ENCODE measurements at regions of chr12 and their contacts with region 1.

Region 1: GRCh38 chr12:26425587-26426260 is 230.4 kb downstream of the SSPN start:
- DNase-seq: no peak
- H3K4me3 ChIP-seq: no peak overlapping the region
- H3K4me3 Mint-ChIP-seq: no peak overlapping the region
- H3K27ac Mint-ChIP-seq: no peak overlapping the region
- H3K4me1 ChIP-seq: peaks cover 25% of the 10 kb centered on the region
- H3K4me1 Mint-ChIP-seq: peaks cover 23% of the 10 kb centered on the region
- H3K27me3 ChIP-seq: no peaks in the 10 kb centered on the region
- H3K27me3 Mint-ChIP-seq: no peaks in the 10 kb centered on the region
- CTCF ChIP-seq: no peak

Region 2: DNA sequence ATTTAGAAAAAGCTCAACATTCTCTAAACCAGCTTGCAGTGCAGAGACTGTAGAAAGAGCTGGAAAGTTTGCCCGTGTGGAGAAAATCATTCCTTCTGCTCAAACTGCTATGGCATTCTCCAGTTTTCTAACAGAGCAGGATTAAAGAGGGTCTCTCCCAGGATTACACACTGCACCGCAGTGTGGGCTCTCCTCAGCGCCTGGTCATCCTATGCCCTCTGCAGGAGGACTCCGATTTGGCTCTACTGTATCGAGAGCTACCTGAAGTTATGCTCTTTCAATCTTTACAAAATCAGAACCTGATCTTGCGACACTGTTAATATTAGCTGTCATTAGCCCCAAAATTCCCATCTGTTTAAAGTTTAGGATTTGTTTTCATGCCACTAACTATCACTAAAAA is 333.9 kb before region 1 on chr12:
- CTCF ChIA-PET with region 1: no interaction called
- POLR2A ChIA-PET with region 1: no interaction called
- intact Hi-C with region 1: loop called (anchors 1 kb)
- DNase-seq: peak in 1 of 2 experiments; percentile 42
- H3K4me3 ChIP-seq: no peak overlapping the region
- H3K4me3 Mint-ChIP-seq: peak overlapping the region; percentile 7
- H3K27ac Mint-ChIP-seq: peak overlapping the region; percentile 84
- H3K4me1 ChIP-seq: peaks cover 61% of the 10 kb centered on the region
- H3K4me1 Mint-ChIP-seq: peaks cover 45% of the 10 kb centered on the region
- H3K27me3 ChIP-seq: no peaks in the 10 kb centered on the region
- H3K27me3 Mint-ChIP-seq: no peaks in the 10 kb centered on the region
- CTCF ChIP-seq: peak; percentile 30 to 34

Region 3: DNA sequence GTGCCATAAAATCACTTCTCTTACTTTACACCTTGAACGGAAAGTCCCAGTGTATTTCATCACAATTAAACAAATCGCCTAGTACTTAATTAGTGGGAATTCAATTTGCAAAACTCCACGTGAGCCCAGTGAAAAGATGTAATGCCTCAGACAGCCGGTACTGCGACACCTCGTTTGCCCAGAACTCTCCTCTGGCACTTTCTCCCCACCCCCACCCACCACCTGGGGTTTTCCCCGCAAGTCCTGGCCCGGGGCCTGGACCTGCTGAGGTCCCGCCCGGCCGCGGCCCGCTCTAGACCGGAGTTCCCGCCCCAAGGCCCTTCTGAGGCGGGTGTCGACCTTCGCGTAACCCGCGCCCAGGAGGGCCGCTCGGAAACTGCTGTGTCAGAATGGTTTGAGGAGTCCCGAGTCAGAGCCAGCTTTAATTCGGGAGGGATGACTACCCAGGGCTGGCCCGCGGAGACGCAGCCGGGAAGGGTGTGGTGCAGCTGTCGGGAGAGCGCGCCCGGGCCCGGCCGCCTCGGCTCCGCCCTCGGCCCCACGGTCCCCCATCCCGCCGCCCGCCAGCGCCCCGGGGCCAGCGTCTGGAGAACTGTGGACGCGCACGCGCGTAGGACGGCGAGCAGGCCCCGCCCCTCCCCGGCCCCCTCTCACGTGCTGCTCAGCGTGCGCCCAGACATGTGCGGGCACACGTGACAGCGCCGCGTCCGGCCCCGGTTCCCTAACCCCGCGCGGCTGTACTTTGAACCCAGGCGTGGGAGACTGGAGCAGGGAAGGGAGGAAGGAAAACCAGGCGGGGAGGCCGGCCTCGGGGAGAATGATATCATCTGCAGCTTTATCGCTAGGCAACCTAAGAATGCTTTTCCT is 311.6 kb before region 1 on chr12:
- CTCF ChIA-PET with region 1: no interaction called
- POLR2A ChIA-PET with region 1: no interaction called
- intact Hi-C with region 1: loop called (anchors 5 kb)
- DNase-seq: peak; percentile 98
- H3K4me3 ChIP-seq: peak overlapping the region; percentile 77
- H3K4me3 Mint-ChIP-seq: peak overlapping the region; percentile 78
- H3K27ac Mint-ChIP-seq: peak overlapping the region; percentile 90
- H3K4me1 ChIP-seq: peaks cover 23% of the 10 kb centered on the region
- H3K4me1 Mint-ChIP-seq: peaks cover 18% of the 10 kb centered on the region
- H3K27me3 ChIP-seq: no peaks in the 10 kb centered on the region
- H3K27me3 Mint-ChIP-seq: peaks cover 2% of the 10 kb centered on the region
- CTCF ChIP-seq: peak; percentile 12 to 48

Region 4: GRCh38 chr12:26389348-26389747 is 36.4 kb before region 1 on chr12:
- CTCF ChIA-PET with region 1: no interaction called
- POLR2A ChIA-PET with region 1: no interaction called
- intact Hi-C with region 1: loop called (anchors 2 kb)
- DNase-seq: peak in 1 of 2 experiments; percentile 69
- H3K4me3 ChIP-seq: no peak overlapping the region
- H3K4me3 Mint-ChIP-seq: peak overlapping the region; percentile 15
- H3K27ac Mint-ChIP-seq: peak overlapping the region; percentile 5
- H3K4me1 ChIP-seq: peaks cover 15% of the 10 kb centered on the region
- H3K4me1 Mint-ChIP-seq: peaks cover 12% of the 10 kb centered on the region
- H3K27me3 ChIP-seq: no peaks in the 10 kb centered on the region
- H3K27me3 Mint-ChIP-seq: no peaks in the 10 kb centered on the region
- CTCF ChIP-seq: no peak

Region 5: GRCh38 chr12:26402648-26403047 is 23.1 kb before region 1 on chr12:
- CTCF ChIA-PET with region 1: no interaction called
- POLR2A ChIA-PET with region 1: no interaction called
- intact Hi-C with region 1: no loop called
- DNase-seq: peak; percentile 46 to 47
- H3K4me3 ChIP-seq: no peak overlapping the region
- H3K4me3 Mint-ChIP-seq: no peak overlapping the region
- H3K27ac Mint-ChIP-seq: no peak overlapping the region
- H3K4me1 ChIP-seq: no peaks in the 10 kb centered on the region
- H3K4me1 Mint-ChIP-seq: no peaks in the 10 kb centered on the region
- H3K27me3 ChIP-seq: no peaks in the 10 kb centered on the region
- H3K27me3 Mint-ChIP-seq: no peaks in the 10 kb centered on the region
- CTCF ChIP-seq: peak; percentile 38 to 43

Region 6: GRCh38 chr12:26514364-26514763 is 88.6 kb after region 1 on chr12:
- CTCF ChIA-PET with region 1: no interaction called
- POLR2A ChIA-PET with region 1: no interaction called
- intact Hi-C with region 1: loop called (anchors 1 kb)
- DNase-seq: no peak
- H3K4me3 ChIP-seq: no peak overlapping the region
- H3K4me3 Mint-ChIP-seq: no peak overlapping the region
- H3K27ac Mint-ChIP-seq: peak overlapping the region; percentile 96
- H3K4me1 ChIP-seq: peaks cover 51% of the 10 kb centered on the region
- H3K4me1 Mint-ChIP-seq: peaks cover 44% of the 10 kb centered on the region
- H3K27me3 ChIP-seq: no peaks in the 10 kb centered on the region
- H3K27me3 Mint-ChIP-seq: no peaks in the 10 kb centered on the region
- CTCF ChIP-seq: no peak

Region 7: DNA sequence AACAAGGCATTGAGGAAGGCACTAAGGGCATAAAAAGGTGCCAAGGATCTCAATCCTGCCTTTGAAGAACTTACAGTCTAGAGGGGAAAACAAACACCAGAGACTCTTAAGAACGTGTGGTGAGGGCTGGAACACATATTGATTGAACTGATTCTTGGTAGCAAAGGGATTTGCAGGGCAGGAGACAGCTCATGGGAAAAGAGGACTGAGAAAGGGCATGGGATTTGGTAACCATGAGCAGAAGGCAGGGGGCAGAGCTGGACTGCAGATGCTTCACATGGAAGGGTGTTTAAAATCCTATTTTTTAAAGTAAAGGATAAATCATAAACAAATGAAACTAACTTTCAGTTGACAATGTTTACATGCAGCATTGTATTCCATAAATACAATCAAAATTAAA is 204.1 kb after region 1 on chr12:
- CTCF ChIA-PET with region 1: no interaction called
- POLR2A ChIA-PET with region 1: no interaction called
- intact Hi-C with region 1: loop called (anchors 1 kb)
- DNase-seq: no peak
- H3K4me3 ChIP-seq: no peak overlapping the region
- H3K4me3 Mint-ChIP-seq: peak overlapping the region; percentile 14
- H3K27ac Mint-ChIP-seq: peak overlapping the region; percentile 51
- H3K4me1 ChIP-seq: peaks cover 57% of the 10 kb centered on the region
- H3K4me1 Mint-ChIP-seq: peaks cover 55% of the 10 kb centered on the region
- H3K27me3 ChIP-seq: no peaks in the 10 kb centered on the region
- H3K27me3 Mint-ChIP-seq: no peaks in the 10 kb centered on the region
- CTCF ChIP-seq: peak in 1 of 2 experiments; percentile 11

Region 8: GRCh38 chr12:26701604-26702215 is 276.0 kb after region 1 on chr12:
- CTCF ChIA-PET with region 1: interaction called, 10 read pairs
- POLR2A ChIA-PET with region 1: no interaction called
- intact Hi-C with region 1: no loop called
- DNase-seq: peak in 1 of 2 experiments; percentile 30
- H3K4me3 ChIP-seq: no peak overlapping the region
- H3K4me3 Mint-ChIP-seq: no peak overlapping the region
- H3K27ac Mint-ChIP-seq: no peak overlapping the region
- H3K4me1 ChIP-seq: peaks cover 23% of the 10 kb centered on the region
- H3K4me1 Mint-ChIP-seq: peaks cover 6% of the 10 kb centered on the region
- H3K27me3 ChIP-seq: no peaks in the 10 kb centered on the region
- H3K27me3 Mint-ChIP-seq: no peaks in the 10 kb centered on the region
- CTCF ChIP-seq: peak; percentile 61 to 71

Measured in Caco-2 (cell line).